ENCODE measurements at regions of chr16 and their contacts with region 1.

Region 1: GRCh38 chr16:18959031-18959505 is 24.7 kb upstream of the TMC7 start:
- DNase-seq: no peak
- ATAC-seq: no peak; the same call in 2 of the 3 replicates
- H3K4me3 ChIP-seq: no peak overlapping the region
- H3K27ac ChIP-seq: no peak overlapping the region
- H3K4me1 ChIP-seq: no peaks in the 10 kb centered on the region
- H3K27me3 ChIP-seq: no peaks in the 10 kb centered on the region
- CTCF ChIP-seq: no peak
- EP300 ChIP-seq: no peak
- POLR2A ChIP-seq: no peak
- RAD21 ChIP-seq: no peak

Region 2: DNA sequence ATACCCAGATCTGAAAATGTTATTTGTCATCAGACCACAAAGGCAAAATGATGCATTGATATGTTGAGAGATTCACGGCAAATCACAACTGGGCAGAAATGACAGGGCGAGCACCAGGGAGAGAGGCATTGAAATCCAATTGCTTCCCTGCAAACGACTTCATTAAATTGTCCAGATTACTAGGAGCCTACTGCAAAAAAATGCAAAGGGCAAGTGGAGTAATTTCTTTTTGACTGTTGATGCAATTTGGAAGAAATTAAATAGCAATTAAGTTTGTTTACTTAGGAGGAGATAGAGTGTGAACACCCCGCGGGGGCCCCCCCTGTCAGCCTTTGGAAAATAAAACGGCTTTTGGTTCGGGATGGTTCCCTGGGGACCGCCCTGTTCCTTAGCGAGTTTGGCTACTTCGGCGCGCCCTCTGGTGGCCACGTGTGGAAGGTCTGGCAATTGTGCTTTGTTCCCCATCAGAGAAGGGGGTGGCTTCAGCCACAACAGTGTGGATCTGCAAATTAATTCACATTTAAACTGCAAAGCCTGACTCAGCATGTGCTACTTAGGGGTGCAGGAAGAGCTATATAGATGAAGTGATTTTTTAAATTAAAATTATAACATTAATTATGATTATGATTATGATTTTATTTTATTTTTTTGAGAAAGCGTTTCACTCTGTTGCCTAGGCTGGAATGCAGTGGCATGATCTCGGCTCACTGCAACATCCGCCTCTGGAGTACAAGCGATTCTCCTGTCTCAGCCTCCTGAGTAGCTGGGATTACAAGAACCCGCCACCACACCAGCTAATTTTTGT is 10.2 kb after region 1 on chr16:
- CTCF ChIA-PET with region 1: interaction called, 11 read pairs
- POLR2A ChIA-PET with region 1: no interaction called
- RAD21 ChIA-PET with region 1: interaction called, 4 read pairs
- SMC1A ChIA-PET with region 1: interaction called, 6 read pairs
- in situ Hi-C with region 1: no loop called
- intact Hi-C with region 1: no loop called
- DNase-seq: peak; percentile 16
- ATAC-seq: peak; percentile 94
- H3K4me3 ChIP-seq: peak overlapping the region; percentile 68
- H3K27ac ChIP-seq: no peak overlapping the region
- H3K4me1 ChIP-seq: no peaks in the 10 kb centered on the region
- H3K27me3 ChIP-seq: no peaks in the 10 kb centered on the region
- CTCF ChIP-seq: peak; percentile 87 to 95 (median 90)
- EP300 ChIP-seq: 0 out of 4 replicates have a peak, but pooled peaks of 1 of the 2 experiments have one; percentile 29
- POLR2A ChIP-seq: no peak
- RAD21 ChIP-seq: peak; percentile 90

Region 3: DNA sequence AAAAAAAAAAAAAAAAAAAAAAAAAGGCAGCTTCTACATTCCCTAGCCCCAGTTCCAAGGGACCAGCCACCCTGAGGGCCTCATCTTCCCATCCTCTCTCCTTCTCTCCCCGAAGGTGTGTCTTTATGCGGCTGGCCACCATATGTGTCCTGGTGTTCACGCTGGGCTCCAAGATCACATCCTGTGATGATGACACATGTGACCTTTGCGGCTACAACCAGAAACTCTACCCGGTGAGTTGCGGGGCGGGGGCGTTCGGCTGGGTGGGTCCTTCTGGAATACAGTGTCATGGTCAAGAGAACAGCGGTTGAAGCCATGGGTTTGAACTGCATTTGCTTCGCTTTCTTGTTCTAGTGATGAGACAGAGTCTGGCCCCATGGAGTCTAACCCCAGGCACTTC is 85.7 kb after region 1 on chr16:
- CTCF ChIA-PET with region 1: no interaction called
- POLR2A ChIA-PET with region 1: no interaction called
- RAD21 ChIA-PET with region 1: no interaction called
- SMC1A ChIA-PET with region 1: no interaction called
- in situ Hi-C with region 1: no loop called
- intact Hi-C with region 1: no loop called
- DNase-seq: no peak
- ATAC-seq: no peak
- H3K4me3 ChIP-seq: no peak overlapping the region
- H3K27ac ChIP-seq: no peak overlapping the region
- H3K4me1 ChIP-seq: no peaks in the 10 kb centered on the region
- H3K27me3 ChIP-seq: no peaks in the 10 kb centered on the region
- CTCF ChIP-seq: no peak
- EP300 ChIP-seq: no peak
- POLR2A ChIP-seq: no peak
- RAD21 ChIP-seq: no peak